ENCODE measurements at regions of chr15 and their contacts with region 1.

Region 1: DNA sequence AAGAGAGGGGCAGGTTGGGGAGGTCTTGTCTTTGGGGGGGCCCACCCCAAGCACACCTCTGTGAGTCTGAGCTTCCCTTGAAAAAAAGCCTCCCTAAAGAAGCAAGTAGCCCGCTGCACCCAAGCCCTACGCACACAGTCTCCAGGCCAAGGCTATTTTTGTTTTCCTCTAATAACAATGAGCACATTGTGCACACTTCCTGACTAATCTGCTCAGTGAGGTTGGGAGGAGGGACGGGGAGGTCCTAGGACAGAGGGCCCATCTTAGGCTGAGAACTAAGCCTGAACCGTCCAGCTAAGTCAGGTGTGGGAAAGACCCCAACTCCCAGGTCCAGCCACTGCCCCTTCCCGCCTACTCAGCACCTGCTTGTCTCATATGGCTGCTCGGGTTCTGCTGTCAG is 87.2 kb downstream of the HMG20A start:
- DNase-seq: no peak
- H3K4me3 ChIP-seq: peak overlapping the region in 1 of 4 donors; percentile 1
- H3K27ac ChIP-seq: peak overlapping the region; percentile 55 to 73 (median 69)
- H3K4me1 ChIP-seq: peaks cover 38 to 60% (median 48%) of the 10 kb centered on the region in 4 donors
- H3K27me3 ChIP-seq: no peaks in the 10 kb centered on the region
- CTCF ChIP-seq: no peak
- EP300 ChIP-seq: no peak
- POLR2A ChIP-seq: no peak

Region 2: DNA sequence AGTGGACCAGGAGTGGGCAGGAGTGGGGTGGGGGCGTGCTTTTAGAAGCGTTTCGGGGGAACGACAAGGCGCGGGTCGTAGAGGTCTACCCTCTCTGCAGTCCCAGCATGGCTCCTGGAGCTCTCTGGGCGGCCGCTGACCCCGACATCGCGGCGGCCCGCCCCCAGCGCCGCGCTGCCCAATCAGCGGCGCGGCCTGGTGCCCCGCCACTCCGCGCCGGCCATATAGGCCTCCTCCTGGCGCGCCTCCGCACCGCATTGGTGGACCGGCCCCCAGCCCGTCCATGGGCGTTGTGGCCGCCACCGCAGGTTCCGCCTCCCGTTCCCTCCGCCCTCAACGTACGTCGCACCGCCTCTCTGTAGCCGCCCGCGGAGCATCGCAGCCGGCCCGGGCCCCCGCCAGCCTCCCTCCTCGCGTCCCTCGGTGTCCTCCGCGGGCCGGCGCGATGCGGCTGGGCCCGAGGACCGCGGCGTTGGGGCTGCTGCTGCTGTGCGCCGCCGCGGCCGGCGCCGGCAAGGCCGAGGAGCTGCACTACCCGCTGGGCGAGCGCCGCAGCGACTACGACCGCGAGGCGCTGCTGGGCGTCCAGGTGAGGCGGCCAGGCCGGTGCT is 576.4 kb before region 1 on chr15 and contains the start of gene RCN2:
- intact Hi-C with region 1: loop called (anchors 10 kb)
- DNase-seq: peak; percentile 98
- H3K4me3 ChIP-seq: peak within 1 kb of the TSS; percentile 66 to 90 (median 78)
- H3K27ac ChIP-seq: peak within 1 kb of the TSS; percentile 83 to 92 (median 88)
- H3K4me1 ChIP-seq: peaks cover 9 to 21% (median 18%) of the 10 kb centered on the region in 4 donors
- H3K27me3 ChIP-seq: no peaks in the 10 kb centered on the region
- CTCF ChIP-seq: no peak
- EP300 ChIP-seq: no peak
- POLR2A ChIP-seq: no peak
- total RNA-seq, gene RCN2: 35.6 to 55.6 (median 43.0) TPM